OCI-LY7 (cell line): ENCODE measurements at regions of chr2 and their contacts with region 1.

Region 1: GRCh38 chr2:175950512-175950911 is 51.6 kb downstream of the LNPK start:
- DNase-seq: no peak
- H3K4me3 ChIP-seq: no peak overlapping the region
- H3K27ac ChIP-seq: no peak overlapping the region
- H3K4me1 ChIP-seq: no peaks in the 10 kb centered on the region
- CTCF ChIP-seq: no peak

Region 2: GRCh38 chr2:175984846-175985245 is 34.3 kb after region 1 on chr2:
- CTCF ChIA-PET with region 1: no interaction called
- POLR2A ChIA-PET with region 1: no interaction called
- intact Hi-C with region 1: loop called (anchors 5 kb)
- DNase-seq: no peak
- H3K4me3 ChIP-seq: no peak overlapping the region
- H3K27ac ChIP-seq: no peak overlapping the region
- H3K4me1 ChIP-seq: no peaks in the 10 kb centered on the region
- CTCF ChIP-seq: no peak